OCI-LY7 (cell line): ENCODE measurements at regions of chr13 and their contacts with region 1.

Region 1: DNA sequence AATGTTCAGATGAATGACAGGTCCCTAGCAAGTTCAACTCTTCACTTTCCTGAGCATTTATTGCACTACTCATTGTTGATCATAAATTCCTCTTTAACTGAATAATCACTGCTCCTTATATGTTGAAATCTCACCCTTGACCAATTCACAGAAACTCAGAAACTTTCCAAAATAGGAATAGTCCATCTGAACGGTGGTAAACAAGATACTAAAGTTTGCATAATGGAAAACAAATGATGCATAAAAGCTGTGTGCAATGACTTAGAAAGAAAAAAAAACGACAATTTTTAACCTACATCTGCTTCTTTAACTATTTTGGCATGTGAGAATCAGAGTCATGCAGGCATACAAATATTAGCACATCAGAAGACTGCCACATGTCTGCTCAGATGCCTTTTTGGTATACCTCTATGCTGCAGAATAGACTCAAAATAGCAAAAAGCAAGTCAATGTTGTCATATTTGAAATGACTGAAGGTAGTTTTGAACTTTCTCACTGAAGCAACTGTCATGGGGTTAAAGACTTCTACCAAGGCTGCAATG is 34.8 kb downstream of the SLC10A2 start:
- DNase-seq: peak; percentile 87
- H3K4me3 ChIP-seq: peak overlapping the region; percentile 43
- H3K27ac ChIP-seq: peak overlapping the region; percentile 97
- H3K4me1 ChIP-seq: peaks cover 77% of the 10 kb centered on the region
- CTCF ChIP-seq: no peak

Region 2: DNA sequence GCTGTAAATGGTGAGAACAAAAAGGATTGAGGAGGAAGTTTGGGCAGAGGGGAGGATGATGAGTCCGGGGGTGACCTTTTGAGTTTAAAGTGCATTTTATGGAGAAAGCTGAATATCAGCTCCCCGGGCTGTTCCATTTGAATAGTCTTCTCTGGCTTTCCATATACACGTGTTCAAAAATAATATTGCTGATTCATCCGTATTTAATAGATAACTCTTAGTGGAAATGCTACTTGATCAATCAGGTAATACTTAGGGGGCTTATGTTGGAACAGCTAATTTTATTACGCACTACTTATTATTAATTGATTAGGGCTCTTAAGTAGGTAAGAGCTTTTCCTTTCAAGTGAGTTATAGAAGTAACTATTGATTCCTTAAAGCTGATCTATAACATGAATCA is 109.2 kb before region 1 on chr13:
- CTCF ChIA-PET with region 1: no interaction called
- POLR2A ChIA-PET with region 1: interaction called, 4 read pairs
- intact Hi-C with region 1: loop called (anchors 2 kb)
- DNase-seq: no peak
- H3K4me3 ChIP-seq: no peak overlapping the region
- H3K27ac ChIP-seq: no peak overlapping the region
- H3K4me1 ChIP-seq: peaks cover 12% of the 10 kb centered on the region
- CTCF ChIP-seq: no peak

Region 3: DNA sequence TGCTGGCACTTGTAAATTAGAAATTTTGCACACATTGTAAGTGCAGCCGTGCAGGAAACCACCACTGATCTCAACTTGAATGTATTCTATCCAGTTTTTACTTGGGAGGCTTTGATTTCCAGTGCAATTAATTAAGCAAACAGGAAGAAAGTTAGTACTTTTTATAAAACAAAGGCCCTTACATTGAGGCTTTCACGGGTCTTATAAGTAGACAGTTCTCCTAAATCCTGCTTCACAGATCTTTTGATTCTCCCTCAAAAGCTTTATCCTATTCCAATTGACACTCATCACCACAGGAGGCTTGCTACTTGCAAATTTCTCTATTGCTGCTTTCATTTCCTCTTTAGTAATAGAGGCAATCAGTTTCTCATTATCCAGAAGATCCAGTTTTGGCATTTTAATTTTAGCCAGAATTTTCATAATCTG is 95.5 kb before region 1 on chr13:
- CTCF ChIA-PET with region 1: no interaction called
- POLR2A ChIA-PET with region 1: interaction called, 4 read pairs
- intact Hi-C with region 1: loop called (anchors 5 kb)
- DNase-seq: peak; percentile 26
- H3K4me3 ChIP-seq: peak overlapping the region; percentile 34
- H3K27ac ChIP-seq: peak overlapping the region; percentile 39
- H3K4me1 ChIP-seq: peaks cover 34% of the 10 kb centered on the region
- CTCF ChIP-seq: no peak

Region 4: GRCh38 chr13:103006641-103007426 is 24.6 kb before region 1 on chr13:
- CTCF ChIA-PET with region 1: no interaction called
- POLR2A ChIA-PET with region 1: interaction called, 3 read pairs
- intact Hi-C with region 1: loop called (anchors 2 kb)
- DNase-seq: peak; percentile 66
- H3K4me3 ChIP-seq: peak overlapping the region; percentile 26
- H3K27ac ChIP-seq: peak overlapping the region; percentile 92
- H3K4me1 ChIP-seq: peaks cover 37% of the 10 kb centered on the region
- CTCF ChIP-seq: no peak

Region 5: GRCh38 chr13:103140001-103140671 is 108.7 kb after region 1 on chr13:
- CTCF ChIA-PET with region 1: no interaction called
- POLR2A ChIA-PET with region 1: interaction called, 3 read pairs
- intact Hi-C with region 1: loop called (anchors 1 kb)
- DNase-seq: peak; percentile 72
- H3K4me3 ChIP-seq: no peak overlapping the region
- H3K27ac ChIP-seq: no peak overlapping the region
- H3K4me1 ChIP-seq: peaks cover 3% of the 10 kb centered on the region
- CTCF ChIP-seq: peak; percentile 79